ENCODE measurements at regions of chr17 and their contacts with region 1.

Region 1: GRCh38 chr17:10226930-10227685 is 28.7 kb upstream of the GAS7 start:
- DNase-seq: no peak
- H3K4me3 ChIP-seq: no peak overlapping the region
- H3K27me3 ChIP-seq: no peaks in the 10 kb centered on the region
- CTCF ChIP-seq: peak; percentile 96

Region 2: DNA sequence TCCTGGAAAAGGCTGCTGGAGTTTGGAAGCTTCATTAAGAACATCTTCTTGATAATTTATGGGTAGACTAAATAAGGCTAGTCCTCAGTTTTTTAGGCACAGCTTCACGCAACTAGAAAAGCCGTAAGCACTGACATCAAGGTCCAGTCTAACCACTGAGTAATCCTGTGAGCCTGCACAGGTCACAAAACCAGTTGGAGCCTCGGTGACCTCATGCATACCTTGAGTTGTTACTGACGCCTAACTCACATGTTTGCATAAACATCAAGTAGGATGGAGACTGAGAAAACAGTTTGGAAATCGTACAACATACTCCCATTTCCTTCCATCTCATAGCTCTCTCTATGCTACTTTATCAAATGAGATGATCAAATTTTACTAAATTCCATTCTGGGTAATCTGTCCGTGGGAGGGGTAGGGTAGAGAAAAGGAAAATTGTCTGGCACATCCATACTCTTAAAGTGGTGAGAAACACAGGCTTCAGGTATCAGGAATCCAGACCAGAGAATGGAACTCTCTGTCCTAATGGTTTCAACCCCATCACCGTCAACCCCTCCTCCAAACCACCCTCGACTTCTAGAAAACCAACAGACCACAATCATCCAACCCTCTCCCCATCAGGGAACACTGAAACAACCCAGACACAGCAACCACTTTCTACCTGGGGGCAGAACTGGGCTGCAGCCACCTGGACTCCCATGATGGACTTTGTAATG is 258.0 kb before region 1 on chr17:
- CTCF ChIA-PET with region 1: interaction called, 70 read pairs
- POLR2A ChIA-PET with region 1: no interaction called
- DNase-seq: no peak
- H3K4me3 ChIP-seq: no peak overlapping the region
- H3K27me3 ChIP-seq: no peaks in the 10 kb centered on the region
- CTCF ChIP-seq: no peak

Region 3: DNA sequence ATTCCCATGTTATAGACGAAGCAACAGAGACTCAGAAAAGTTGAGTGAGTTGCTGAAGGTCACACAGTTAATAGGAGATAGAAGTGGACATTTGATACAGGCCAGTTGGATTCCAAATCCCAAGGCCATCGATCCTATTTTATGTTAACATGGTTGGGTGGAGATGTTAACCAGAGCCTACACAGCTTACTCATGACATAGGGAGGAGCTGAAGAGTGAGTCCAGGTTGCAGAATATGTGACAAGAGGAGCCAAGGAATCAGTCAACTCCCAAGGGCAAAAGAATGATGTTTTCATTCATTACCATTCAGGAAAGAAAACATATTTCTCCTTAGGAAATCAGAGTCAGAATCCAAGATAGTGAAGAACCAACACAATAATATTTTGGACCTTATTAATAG is 11.6 kb after region 1 on chr17:
- CTCF ChIA-PET with region 1: interaction called, 18 read pairs
- POLR2A ChIA-PET with region 1: no interaction called
- DNase-seq: no peak
- H3K4me3 ChIP-seq: no peak overlapping the region
- H3K27me3 ChIP-seq: no peaks in the 10 kb centered on the region
- CTCF ChIP-seq: no peak

Region 4: DNA sequence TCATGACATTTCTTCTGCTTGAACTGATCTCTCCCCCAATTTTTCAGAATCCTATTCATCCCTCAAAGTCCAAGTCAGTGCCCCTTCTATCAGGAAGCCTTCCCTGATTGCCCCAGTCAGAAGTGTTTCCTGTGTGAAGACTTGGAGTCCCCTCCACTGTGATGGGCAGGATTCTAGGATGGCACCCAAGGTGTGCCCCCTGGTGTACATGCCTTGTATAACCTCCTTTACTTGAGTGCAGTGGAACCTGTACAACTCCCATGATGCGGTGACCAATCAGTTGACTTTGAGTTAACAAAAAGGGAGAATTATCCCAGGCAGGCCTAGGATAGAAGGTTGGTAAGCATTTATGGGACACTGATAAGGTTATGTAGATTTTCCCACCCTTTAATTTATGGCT is 122.3 kb after region 1 on chr17:
- CTCF ChIA-PET with region 1: no interaction called
- POLR2A ChIA-PET with region 1: no interaction called
- DNase-seq: no peak
- H3K4me3 ChIP-seq: no peak overlapping the region
- H3K27me3 ChIP-seq: no peaks in the 10 kb centered on the region
- CTCF ChIP-seq: no peak

Region 5: DNA sequence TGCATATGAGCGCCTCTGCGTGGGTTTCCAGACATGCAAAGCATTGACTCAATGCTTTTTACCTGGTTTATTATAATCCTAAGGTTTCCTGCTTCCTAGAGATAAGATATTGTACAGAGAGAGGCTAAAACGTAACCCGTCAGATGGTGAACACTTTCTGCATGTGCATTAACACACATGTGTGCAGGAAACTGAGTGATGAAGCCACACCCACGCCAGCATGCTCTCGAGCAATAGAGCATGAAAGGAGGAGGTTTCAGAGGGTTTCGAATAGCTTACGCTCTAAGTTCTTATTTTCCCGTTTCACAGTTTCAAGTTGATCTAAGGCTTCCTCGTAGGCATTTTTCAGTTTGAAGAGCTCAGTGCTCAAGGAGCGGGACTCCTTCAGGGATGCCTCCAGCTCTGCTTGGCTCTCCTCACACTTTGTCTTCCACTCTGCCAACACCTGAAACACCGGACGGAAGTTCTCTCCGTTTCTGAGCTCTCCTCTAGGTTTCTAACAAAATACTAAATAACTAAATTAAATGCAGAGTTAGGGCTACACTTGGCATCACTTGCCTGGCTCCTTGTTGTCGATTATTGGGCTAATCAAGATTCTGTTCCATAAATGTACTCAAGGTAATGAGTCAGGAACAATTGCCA is 406.8 kb after region 1 on chr17:
- CTCF ChIA-PET with region 1: no interaction called
- POLR2A ChIA-PET with region 1: no interaction called
- DNase-seq: no peak
- H3K4me3 ChIP-seq: no peak overlapping the region
- H3K27me3 ChIP-seq: no peaks in the 10 kb centered on the region
- CTCF ChIP-seq: no peak